ENCODE measurements at regions of chr9 and their contacts with region 1.

Region 1: GRCh38 chr9:69542942-69543704 is 129.0 kb downstream of the APBA1 start:
- DNase-seq: no peak
- H3K4me3 Mint-ChIP-seq: no peak overlapping the region
- H3K27ac Mint-ChIP-seq: no peak overlapping the region
- H3K4me1 Mint-ChIP-seq: peaks cover 45% of the 10 kb centered on the region
- H3K27me3 Mint-ChIP-seq: no peaks in the 10 kb centered on the region
- CTCF ChIP-seq: no peak

Region 2: GRCh38 chr9:69339620-69340019 is 203.5 kb before region 1 on chr9:
- CTCF ChIA-PET with region 1: no interaction called
- intact Hi-C with region 1: no loop called
- DNase-seq: no peak
- H3K4me3 Mint-ChIP-seq: no peak overlapping the region
- H3K27ac Mint-ChIP-seq: no peak overlapping the region
- H3K4me1 Mint-ChIP-seq: no peaks in the 10 kb centered on the region
- H3K27me3 Mint-ChIP-seq: no peaks in the 10 kb centered on the region
- CTCF ChIP-seq: no peak

Region 3: DNA sequence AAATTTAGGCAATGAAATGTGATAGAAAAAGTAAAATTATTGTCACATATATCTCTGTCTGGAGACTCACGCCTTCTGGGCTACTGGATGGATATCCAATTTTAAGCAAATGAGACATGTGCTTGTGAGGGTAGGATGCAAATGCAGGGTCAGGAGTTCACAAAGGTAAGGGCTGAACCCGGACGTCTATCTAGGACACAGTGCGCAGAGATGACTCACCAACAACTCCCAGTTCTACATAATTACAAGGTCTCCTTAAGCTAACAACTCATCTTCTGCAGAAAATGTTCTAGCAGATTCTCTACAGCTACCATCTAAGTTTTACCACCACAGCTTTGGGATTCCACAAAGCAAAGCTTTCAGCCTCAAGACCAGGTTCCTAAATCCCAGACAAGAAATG is 57.7 kb before region 1 on chr9:
- CTCF ChIA-PET with region 1: no interaction called
- intact Hi-C with region 1: loop called (anchors 5 kb)
- DNase-seq: no peak
- H3K4me3 Mint-ChIP-seq: no peak overlapping the region
- H3K27ac Mint-ChIP-seq: no peak overlapping the region
- H3K4me1 Mint-ChIP-seq: peaks cover 24% of the 10 kb centered on the region
- H3K27me3 Mint-ChIP-seq: no peaks in the 10 kb centered on the region
- CTCF ChIP-seq: no peak

Region 4: GRCh38 chr9:69582544-69583297 is 39.6 kb after region 1 on chr9:
- CTCF ChIA-PET with region 1: no interaction called
- intact Hi-C with region 1: no loop called
- DNase-seq: peak; percentile 11
- H3K4me3 Mint-ChIP-seq: no peak overlapping the region
- H3K27ac Mint-ChIP-seq: no peak overlapping the region
- H3K4me1 Mint-ChIP-seq: peaks cover 18% of the 10 kb centered on the region
- H3K27me3 Mint-ChIP-seq: no peaks in the 10 kb centered on the region
- CTCF ChIP-seq: no peak

Measured in Calu3 (cell line).